H1 (cell line): ENCODE measurements at regions of chr17 and their contacts with region 1.

Region 1: GRCh38 chr17:78019367-78019975 is 61.0 kb downstream of the TNRC6C start:
- DNase-seq: no peak
- H3K4me3 ChIP-seq: no peak overlapping the region
- H3K27ac ChIP-seq: no peak overlapping the region
- H3K4me1 ChIP-seq: no peaks in the 10 kb centered on the region; a peak in 1 of 7 replicates
- H3K27me3 ChIP-seq: no peaks in the 10 kb centered on the region
- CTCF ChIP-seq: peak in 2 of 3 experiments; percentile 18 to 36; a peak in 2 of 4 replicates
- EP300 ChIP-seq: no peak
- POLR2A ChIP-seq: no peak
- RAD21 ChIP-seq: peak in 1 of 2 experiments; percentile 44; a peak in 3 of 4 replicates

Region 2: DNA sequence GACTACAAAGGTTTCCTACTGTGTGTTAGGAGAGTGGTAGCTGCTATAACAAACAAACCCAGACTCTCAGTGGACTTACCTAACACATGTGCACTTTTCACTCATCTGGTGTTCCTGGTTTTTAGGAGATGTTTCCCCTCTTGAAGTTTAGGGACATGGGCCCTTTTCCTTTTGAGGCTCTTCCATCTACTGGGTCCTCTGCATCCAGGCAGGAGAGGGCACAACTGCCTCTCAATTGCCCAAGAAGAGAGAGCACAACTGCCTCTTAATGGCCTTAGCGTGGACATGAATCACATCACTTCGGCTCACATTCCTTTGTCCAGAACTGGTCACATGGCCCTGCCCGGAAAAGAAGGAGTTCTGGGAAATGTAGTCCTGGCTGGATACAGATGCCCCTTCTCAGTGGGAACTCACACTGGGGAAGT is 70.8 kb before region 1 on chr17:
- CTCF ChIA-PET with region 1: no interaction called
- POLR2A ChIA-PET with region 1: no interaction called
- DNase-seq: no peak
- H3K4me3 ChIP-seq: peak overlapping the region in 1 of 4 experiments; percentile 35; a peak in 1 of 8 replicates
- H3K27ac ChIP-seq: no peak overlapping the region
- H3K4me1 ChIP-seq: peaks cover 0 to 6% (median 1%) of the 10 kb centered on the region in 4 experiments; a peak in 2 of 7 replicates
- H3K27me3 ChIP-seq: peaks cover 0 to 3% (median 1%) of the 10 kb centered on the region in 4 experiments; a peak in 1 of 7 replicates
- CTCF ChIP-seq: no peak
- EP300 ChIP-seq: no peak
- POLR2A ChIP-seq: no peak
- RAD21 ChIP-seq: no peak

Region 3: DNA sequence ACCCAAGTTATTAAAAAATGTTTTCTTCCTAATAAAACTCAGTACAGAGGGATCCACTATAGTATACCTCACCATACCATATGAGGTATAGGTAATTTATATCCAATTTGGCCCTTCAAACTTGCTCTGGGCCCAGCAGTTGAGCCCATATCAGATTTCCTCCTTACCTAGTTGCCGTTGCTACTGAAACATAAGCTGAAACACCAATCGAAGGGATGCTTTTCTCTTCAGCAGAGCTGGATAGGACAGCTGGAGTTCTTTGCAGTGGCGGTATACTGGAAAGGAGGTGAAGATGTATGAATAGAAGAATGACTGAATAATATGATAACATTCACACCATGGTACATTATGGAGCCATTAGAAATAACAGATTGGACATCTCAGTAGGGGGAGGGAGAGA is 18.3 kb before region 1 on chr17:
- CTCF ChIA-PET with region 1: interaction called, 40 read pairs
- POLR2A ChIA-PET with region 1: interaction called, 3 read pairs
- DNase-seq: no peak
- H3K4me3 ChIP-seq: no peak overlapping the region
- H3K27ac ChIP-seq: no peak overlapping the region
- H3K4me1 ChIP-seq: peaks cover 4 to 15% (median 8%) of the 10 kb centered on the region in 4 experiments; a peak in 6 of 7 replicates
- H3K27me3 ChIP-seq: no peaks in the 10 kb centered on the region
- CTCF ChIP-seq: no peak
- EP300 ChIP-seq: no peak
- POLR2A ChIP-seq: no peak
- RAD21 ChIP-seq: no peak

Region 4: GRCh38 chr17:78034429-78035091 is 15.1 kb after region 1 on chr17:
- CTCF ChIA-PET with region 1: interaction called, 13 read pairs
- POLR2A ChIA-PET with region 1: interaction called, 4 read pairs
- DNase-seq: no peak
- H3K4me3 ChIP-seq: no peak overlapping the region
- H3K27ac ChIP-seq: no peak overlapping the region
- H3K4me1 ChIP-seq: no peaks in the 10 kb centered on the region
- H3K27me3 ChIP-seq: no peaks in the 10 kb centered on the region
- CTCF ChIP-seq: no peak
- EP300 ChIP-seq: no peak
- POLR2A ChIP-seq: no peak
- RAD21 ChIP-seq: no peak

Region 5: DNA sequence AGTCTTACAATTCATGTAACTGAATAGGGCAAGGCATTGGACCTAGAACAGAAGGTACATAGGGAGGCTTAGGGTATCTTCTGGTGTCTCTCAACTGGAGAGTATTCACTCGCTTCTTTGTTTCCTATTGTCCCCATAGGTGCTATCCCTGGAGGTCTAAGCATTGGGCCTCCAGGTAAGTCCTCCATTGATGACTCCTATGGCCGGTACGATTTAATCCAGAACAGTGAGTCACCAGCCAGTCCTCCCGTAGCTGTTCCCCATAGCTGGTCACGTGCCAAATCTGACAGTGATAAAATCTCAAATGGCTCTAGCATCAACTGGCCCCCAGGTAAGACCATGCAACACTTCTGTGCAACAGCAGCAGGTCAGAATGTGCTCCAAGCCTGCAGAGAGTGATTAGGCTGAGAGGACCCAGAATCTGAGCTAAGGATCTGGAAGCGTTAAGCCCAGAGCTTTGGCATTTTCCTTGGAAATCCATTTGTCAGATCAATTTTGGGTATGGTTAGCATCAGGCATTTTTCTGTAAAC is 73.4 kb after region 1 on chr17:
- CTCF ChIA-PET with region 1: no interaction called
- POLR2A ChIA-PET with region 1: no interaction called
- DNase-seq: no peak
- H3K4me3 ChIP-seq: no peak overlapping the region
- H3K27ac ChIP-seq: no peak overlapping the region
- H3K4me1 ChIP-seq: no peaks in the 10 kb centered on the region
- H3K27me3 ChIP-seq: no peaks in the 10 kb centered on the region
- CTCF ChIP-seq: no peak
- EP300 ChIP-seq: no peak
- POLR2A ChIP-seq: no peak
- RAD21 ChIP-seq: no peak